ENCODE measurements at regions of chr12 and their contacts with region 1.

Region 1: GRCh38 chr12:57896434-57897201 is 44.7 kb upstream of the ATP23 start:
- DNase-seq: peak; percentile 53

Region 2: DNA sequence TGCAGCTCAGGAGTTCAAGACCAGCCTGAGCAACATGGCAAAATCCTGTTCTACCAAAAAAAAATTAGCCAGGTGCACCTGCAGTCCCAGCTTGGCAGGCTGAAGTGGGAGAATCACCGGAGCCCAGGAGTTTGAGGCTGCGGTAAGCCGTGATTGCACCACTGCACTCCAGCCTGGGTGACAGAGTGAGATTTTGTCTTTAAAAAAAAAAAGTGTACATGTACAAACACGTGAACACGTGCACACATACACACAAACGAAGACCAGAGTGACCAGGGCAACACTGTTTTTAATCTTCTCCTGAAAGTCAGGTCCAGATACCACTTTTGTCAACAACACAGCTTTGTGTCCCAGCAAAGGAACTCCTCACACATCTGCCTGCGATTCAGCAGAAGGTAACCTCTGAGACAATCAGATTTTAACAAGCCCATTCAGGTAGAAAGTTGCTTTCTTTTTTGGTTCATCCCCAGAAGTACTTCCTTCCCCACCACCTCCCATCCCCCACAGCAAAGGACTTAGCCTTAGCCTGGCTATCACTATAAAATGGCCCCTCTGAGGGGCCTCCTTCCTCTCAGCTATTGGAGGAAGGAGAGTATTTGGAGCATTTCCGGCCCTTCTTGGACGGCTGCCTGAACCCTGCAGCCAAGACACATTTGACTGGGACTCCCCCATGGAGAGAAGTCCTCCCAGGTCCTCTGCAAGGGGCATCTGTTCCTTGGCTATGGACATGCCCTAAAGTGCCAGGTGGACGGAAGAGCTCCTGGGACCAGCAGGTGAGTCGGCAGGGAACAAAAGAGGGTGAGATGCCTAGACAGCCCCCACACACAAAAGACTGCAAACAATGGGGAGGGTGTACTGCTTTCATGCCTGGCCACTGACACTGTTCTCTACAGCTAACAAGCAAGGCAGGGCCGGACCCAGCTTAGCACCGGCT is 59.9 kb before region 1 on chr12:
- CTCF ChIA-PET with region 1: interaction called, 21 read pairs
- POLR2A ChIA-PET with region 1: interaction called, 24 read pairs
- DNase-seq: peak; percentile 42

Region 3: GRCh38 chr12:57846577-57847319 is 49.9 kb before region 1 on chr12 and contains the start of gene CTDSP2:
- CTCF ChIA-PET with region 1: interaction called, 4 read pairs
- POLR2A ChIA-PET with region 1: interaction called, 55 read pairs
- DNase-seq: peak; percentile 100

Region 4: GRCh38 chr12:57865090-57865751 is 31.4 kb before region 1 on chr12:
- CTCF ChIA-PET with region 1: no interaction called
- POLR2A ChIA-PET with region 1: interaction called, 32 read pairs
- DNase-seq: peak; percentile 69

Measured in HEK293T (cell line).